IMR-90 (cell line): ENCODE measurements at regions of chr11 and their contacts with region 1.

Region 1: GRCh38 chr11:447923-448731 is 2.0 kb upstream of the PTDSS2 start:
- DNase-seq: peak; percentile 84
- ATAC-seq: peak; percentile 78
- H3K4me3 ChIP-seq: peak overlapping the region; percentile 94
- H3K27ac ChIP-seq: peak overlapping the region; percentile 74
- H3K4me1 ChIP-seq: peaks cover 9% of the 10 kb centered on the region
- H3K27me3 ChIP-seq: peaks cover 4% of the 10 kb centered on the region; the same call in 1 of the 2 replicates
- CTCF ChIP-seq: peak; percentile 81
- POLR2A ChIP-seq: peak; percentile 65; the same call in 1 of the 2 replicates
- RAD21 ChIP-seq: peak; percentile 76

Region 2: GRCh38 chr11:207208-207862 is 240.8 kb before region 1 on chr11 and contains the starts of genes BET1L and RIC8A:
- CTCF ChIA-PET with region 1: no interaction called
- POLR2A ChIA-PET with region 1: no interaction called
- dilution Hi-C with region 1: no loop called
- in situ Hi-C with region 1: no loop called
- intact Hi-C with region 1: loop called (anchors 5 kb)
- DNase-seq: peak; percentile 99
- ATAC-seq: peak; percentile 76
- H3K4me3 ChIP-seq: peak within 1 kb of the TSS; percentile 70
- H3K27ac ChIP-seq: peak within 1 kb of the TSS; percentile 88
- H3K4me1 ChIP-seq: peaks cover 25% of the 10 kb centered on the region
- H3K27me3 ChIP-seq: no peaks in the 10 kb centered on the region
- CTCF ChIP-seq: no peak
- POLR2A ChIP-seq: peak; percentile 96
- RAD21 ChIP-seq: no peak
- total RNA-seq, gene BET1L: 10.0 and 10.8 TPM in 2 replicates
- total RNA-seq, gene RIC8A: 114 and 129 TPM in 2 replicates

Region 3: GRCh38 chr11:279966-280582 is 168.1 kb before region 1 on chr11:
- CTCF ChIA-PET with region 1: no interaction called
- POLR2A ChIA-PET with region 1: no interaction called
- dilution Hi-C with region 1: no loop called
- in situ Hi-C with region 1: no loop called
- intact Hi-C with region 1: no loop called
- DNase-seq: peak; percentile 30
- ATAC-seq: peak; percentile 78
- H3K4me3 ChIP-seq: no peak overlapping the region
- H3K27ac ChIP-seq: no peak overlapping the region
- H3K4me1 ChIP-seq: no peaks in the 10 kb centered on the region
- H3K27me3 ChIP-seq: peaks cover 71% of the 10 kb centered on the region
- CTCF ChIP-seq: no peak
- POLR2A ChIP-seq: no peak
- RAD21 ChIP-seq: no peak

Region 4: GRCh38 chr11:304915-305843 is 142.9 kb before region 1 on chr11:
- CTCF ChIA-PET with region 1: no interaction called
- POLR2A ChIA-PET with region 1: no interaction called
- dilution Hi-C with region 1: no loop called
- in situ Hi-C with region 1: loop called (anchors 10 kb)
- intact Hi-C with region 1: loop called (anchors 2 kb)
- DNase-seq: peak; percentile 79
- ATAC-seq: peak; percentile 50
- H3K4me3 ChIP-seq: no peak overlapping the region
- H3K27ac ChIP-seq: no peak overlapping the region
- H3K4me1 ChIP-seq: peaks cover 4% of the 10 kb centered on the region
- H3K27me3 ChIP-seq: peaks cover 5% of the 10 kb centered on the region
- CTCF ChIP-seq: peak; percentile 85
- POLR2A ChIP-seq: no peak
- RAD21 ChIP-seq: peak; percentile 68

Region 5: GRCh38 chr11:363948-364761 is 84.0 kb before region 1 on chr11:
- CTCF ChIA-PET with region 1: interaction called, 3 read pairs
- POLR2A ChIA-PET with region 1: no interaction called
- dilution Hi-C with region 1: no loop called
- in situ Hi-C with region 1: no loop called
- intact Hi-C with region 1: loop called (anchors 10 kb)
- DNase-seq: no peak
- ATAC-seq: no peak
- H3K4me3 ChIP-seq: no peak overlapping the region
- H3K27ac ChIP-seq: no peak overlapping the region
- H3K4me1 ChIP-seq: peaks cover 4% of the 10 kb centered on the region
- H3K27me3 ChIP-seq: peaks cover 27% of the 10 kb centered on the region
- CTCF ChIP-seq: 0 out of 2 replicates have a peak, but pooled peaks have one; percentile 12
- POLR2A ChIP-seq: no peak
- RAD21 ChIP-seq: no peak

Region 6: DNA sequence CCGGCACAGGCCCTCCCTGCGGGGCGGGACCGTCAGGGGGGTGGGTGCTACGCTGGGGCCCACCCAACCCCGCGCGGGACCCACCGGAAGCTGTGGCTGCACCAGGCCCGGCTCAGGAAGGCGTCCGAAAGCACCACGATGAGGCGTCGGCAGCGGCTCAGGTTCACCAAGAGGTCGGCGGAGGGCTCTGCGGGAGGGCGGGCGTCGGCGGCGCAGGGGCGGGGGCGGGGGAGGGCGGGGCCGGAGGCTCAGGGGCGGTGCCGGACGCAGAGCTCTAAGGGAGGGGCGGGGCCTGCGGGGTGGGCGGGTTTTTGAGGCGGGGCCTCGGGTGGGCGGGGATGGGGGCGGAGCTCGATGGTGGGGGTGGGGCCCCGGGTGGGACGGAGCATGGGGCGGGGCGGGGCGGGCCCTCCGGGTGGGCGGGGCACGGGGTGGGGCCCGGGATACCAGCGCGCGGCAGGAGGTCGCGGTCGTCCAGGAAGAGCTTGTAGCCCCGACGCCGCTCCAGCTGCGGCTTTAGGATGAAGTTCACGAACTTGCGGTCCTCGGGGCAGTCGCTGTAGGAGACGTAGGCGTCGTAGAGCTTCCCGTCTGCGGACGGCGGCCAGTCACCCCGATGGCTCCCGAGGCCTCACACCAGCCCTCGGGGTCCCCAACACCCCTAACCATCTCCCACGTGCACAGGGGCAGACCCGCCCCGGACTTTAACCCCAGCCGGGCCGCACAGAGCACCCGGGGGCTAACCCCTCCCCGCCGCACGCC is 41.0 kb before region 1 on chr11:
- CTCF ChIA-PET with region 1: interaction called, 12 read pairs
- POLR2A ChIA-PET with region 1: no interaction called
- dilution Hi-C with region 1: no loop called
- in situ Hi-C with region 1: no loop called
- intact Hi-C with region 1: no loop called
- DNase-seq: peak; percentile 65
- ATAC-seq: peak; percentile 83
- H3K4me3 ChIP-seq: peak overlapping the region; percentile 54
- H3K27ac ChIP-seq: peak overlapping the region; percentile 6; the same call in 1 of the 2 replicates
- H3K4me1 ChIP-seq: peaks cover 3% of the 10 kb centered on the region; the same call in 1 of the 2 replicates
- H3K27me3 ChIP-seq: peaks cover 3% of the 10 kb centered on the region; the same call in 1 of the 2 replicates
- CTCF ChIP-seq: no peak
- POLR2A ChIP-seq: no peak
- RAD21 ChIP-seq: no peak

Region 7: DNA sequence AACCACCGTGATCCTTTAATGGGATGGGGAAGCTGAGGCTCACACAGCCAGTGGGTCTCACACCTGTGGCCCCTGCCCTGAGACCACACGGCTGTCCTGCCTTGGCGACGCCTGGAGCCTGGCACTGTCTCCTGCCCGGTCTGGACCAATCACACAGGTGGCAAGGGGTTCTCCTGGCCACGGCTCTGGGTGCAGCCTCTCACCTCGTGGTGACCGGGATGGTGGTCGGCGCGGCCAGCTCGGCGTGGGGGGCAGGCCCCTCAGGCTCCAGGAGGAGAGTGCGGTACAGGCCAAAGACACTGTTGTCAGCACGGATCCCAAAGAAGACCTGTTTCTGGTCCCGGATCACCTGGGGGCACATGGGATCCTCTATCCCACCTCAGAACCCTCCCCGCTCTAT is 15.0 kb before region 1 on chr11:
- CTCF ChIA-PET with region 1: no interaction called
- POLR2A ChIA-PET with region 1: no interaction called
- dilution Hi-C with region 1: no loop called
- in situ Hi-C with region 1: no loop called
- intact Hi-C with region 1: no loop called
- DNase-seq: no peak
- ATAC-seq: no peak
- H3K4me3 ChIP-seq: no peak overlapping the region
- H3K27ac ChIP-seq: no peak overlapping the region
- H3K4me1 ChIP-seq: no peaks in the 10 kb centered on the region
- H3K27me3 ChIP-seq: peaks cover 6% of the 10 kb centered on the region
- CTCF ChIP-seq: no peak
- POLR2A ChIP-seq: no peak
- RAD21 ChIP-seq: no peak

Region 8: GRCh38 chr11:469684-470560 is 21.8 kb after region 1 on chr11:
- CTCF ChIA-PET with region 1: interaction called, 3 read pairs
- POLR2A ChIA-PET with region 1: no interaction called
- dilution Hi-C with region 1: no loop called
- in situ Hi-C with region 1: no loop called
- intact Hi-C with region 1: loop called (anchors 2 kb)
- DNase-seq: peak; percentile 81
- ATAC-seq: peak; percentile 93
- H3K4me3 ChIP-seq: peak overlapping the region; percentile 6; the same call in 1 of the 2 replicates
- H3K27ac ChIP-seq: peak overlapping the region; percentile 99
- H3K4me1 ChIP-seq: peaks cover 17% of the 10 kb centered on the region
- H3K27me3 ChIP-seq: no peaks in the 10 kb centered on the region
- CTCF ChIP-seq: peak; percentile 46
- POLR2A ChIP-seq: no peak
- RAD21 ChIP-seq: no peak

Region 9: GRCh38 chr11:506238-506994 is 58.3 kb after region 1 on chr11:
- CTCF ChIA-PET with region 1: no interaction called
- POLR2A ChIA-PET with region 1: no interaction called
- dilution Hi-C with region 1: no loop called
- in situ Hi-C with region 1: no loop called
- intact Hi-C with region 1: loop called (anchors 2 kb)
- DNase-seq: peak; percentile 98
- ATAC-seq: peak; percentile 77
- H3K4me3 ChIP-seq: peak overlapping the region; percentile 97
- H3K27ac ChIP-seq: peak overlapping the region; percentile 99
- H3K4me1 ChIP-seq: peaks cover 12% of the 10 kb centered on the region
- H3K27me3 ChIP-seq: no peaks in the 10 kb centered on the region
- CTCF ChIP-seq: no peak; the same call in 1 of the 2 replicates
- POLR2A ChIP-seq: peak; percentile 91
- RAD21 ChIP-seq: no peak